Mammary epithelial cell (primary cell): ENCODE measurements at regions of chr4 and their contacts with region 1.

Region 1: GRCh38 chr4:82798168-82799005 is at the start of gene SCD5:
- DNase-seq: peak; percentile 86
- H3K4me3 ChIP-seq: peak within 1 kb of the TSS; percentile 71 to 85 (median 81)
- H3K27ac ChIP-seq: peak within 1 kb of the TSS; percentile 61
- H3K4me1 ChIP-seq: peaks cover 21% of the 10 kb centered on the region
- H3K27me3 ChIP-seq: no peaks in the 10 kb centered on the region
- CTCF ChIP-seq: no peak
- total RNA-seq, gene SCD5: 50.4 to 74.3 TPM

Region 2: DNA sequence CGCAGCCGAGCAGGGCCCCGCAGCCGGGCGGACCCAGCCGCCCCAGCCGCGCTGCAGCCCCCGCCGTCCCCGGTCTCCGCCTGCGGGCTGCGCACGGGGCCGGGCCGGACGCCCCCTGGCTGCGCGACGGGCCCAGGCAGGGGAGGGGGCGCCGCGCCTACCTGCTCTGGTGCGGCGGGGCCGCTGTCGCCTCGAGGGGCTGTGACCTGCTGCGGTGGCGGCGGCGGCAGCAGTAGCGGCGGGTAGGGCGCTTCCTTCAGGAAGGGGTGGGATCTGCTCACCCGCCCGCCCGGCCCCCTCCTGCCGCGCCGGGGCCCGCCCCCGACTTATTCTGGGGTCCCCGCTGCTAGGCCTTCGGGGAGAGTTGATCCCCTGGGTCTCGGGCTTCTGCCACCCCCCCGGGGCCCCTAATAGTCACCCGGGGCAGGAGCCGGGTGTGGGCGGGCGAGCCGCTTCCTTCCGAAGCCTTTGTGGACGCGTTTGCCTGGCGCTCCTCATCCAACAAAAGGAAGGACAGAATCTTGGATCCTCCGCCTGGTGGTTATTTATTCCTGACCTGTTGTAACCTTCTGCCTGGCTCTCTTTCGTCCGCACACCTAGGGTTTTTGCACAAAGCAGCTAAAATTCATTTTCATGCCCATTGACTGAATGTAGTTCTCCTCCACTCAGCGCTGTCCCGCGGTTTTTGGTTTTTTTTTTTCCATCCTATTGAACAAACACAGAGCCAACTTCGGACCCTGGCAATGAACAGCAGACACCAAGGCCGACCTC is 236.5 kb before region 1 on chr4 and contains the start of gene TMEM150C:
- CTCF ChIA-PET with region 1: no interaction called
- dilution Hi-C with region 1: no loop called
- in situ Hi-C with region 1: no loop called
- intact Hi-C with region 1: loop called (anchors 10 kb)
- DNase-seq: no peak
- H3K4me3 ChIP-seq: peak within 1 kb of the TSS; percentile 45 to 64 (median 64)
- H3K27ac ChIP-seq: no peak within 1 kb of the TSS
- H3K4me1 ChIP-seq: no peaks in the 10 kb centered on the region
- H3K27me3 ChIP-seq: peaks cover 12% of the 10 kb centered on the region
- CTCF ChIP-seq: no peak
- total RNA-seq, gene TMEM150C: 0.59 to 1.5 TPM

Region 3: DNA sequence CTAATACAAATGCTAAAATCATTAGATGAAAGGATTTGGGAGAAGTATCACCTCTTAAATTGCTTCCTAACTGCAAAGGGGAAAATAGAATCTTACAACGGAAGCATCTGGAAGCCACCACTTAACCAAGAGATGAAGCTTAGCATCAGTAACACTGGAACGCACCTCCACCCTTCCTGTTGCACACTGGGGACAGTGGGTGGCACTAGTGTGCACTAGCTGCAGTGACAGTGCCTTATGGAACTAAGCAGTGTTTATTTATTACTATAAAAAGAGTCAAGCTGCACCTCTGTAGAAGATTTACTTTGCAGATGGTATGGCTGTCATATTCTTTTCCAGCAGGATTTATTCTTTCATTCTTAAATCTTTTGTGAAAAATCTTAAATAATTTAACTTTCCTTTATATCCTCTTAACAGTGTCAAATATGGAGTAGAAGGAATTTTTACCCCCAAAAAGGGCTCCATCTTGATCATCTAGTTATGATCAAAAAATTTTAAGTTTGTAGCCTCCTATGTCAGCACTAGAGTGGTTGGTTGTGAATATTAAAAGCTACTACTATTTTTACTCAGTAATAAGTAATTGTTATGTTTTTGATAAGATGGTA is 76.5 kb before region 1 on chr4:
- CTCF ChIA-PET with region 1: interaction called, 10 read pairs
- dilution Hi-C with region 1: no loop called
- in situ Hi-C with region 1: no loop called
- intact Hi-C with region 1: loop called (anchors 1 kb)
- DNase-seq: no peak
- H3K4me3 ChIP-seq: no peak overlapping the region
- H3K27ac ChIP-seq: no peak overlapping the region
- H3K4me1 ChIP-seq: no peaks in the 10 kb centered on the region
- H3K27me3 ChIP-seq: no peaks in the 10 kb centered on the region
- CTCF ChIP-seq: peak; percentile 46 to 73